Naive thymus-derived CD4-positive, alpha-beta T cell (primary cell): ENCODE measurements at regions of chr13 and their contacts with region 1.

Region 1: GRCh38 chr13:40963919-40964318 is 55.2 kb downstream of the ELF1 start:
- DNase-seq: no peak
- ATAC-seq: peak; percentile 38
- H3K4me3 ChIP-seq: no peak overlapping the region
- H3K4me3 Mint-ChIP-seq: peak overlapping the region in 9 of 10 donors; percentile 4 to 88 (median 35)
- H3K27ac ChIP-seq: no peak overlapping the region
- H3K27ac Mint-ChIP-seq: peak overlapping the region in 4 of 9 donors; percentile 44 to 83 (median 76)
- H3K4me1 ChIP-seq: peaks cover 40 to 62% of the 10 kb centered on the region in 2 donors
- H3K4me1 Mint-ChIP-seq: peaks cover 65 to 95% (median 89%) of the 10 kb centered on the region in 7 donors
- H3K27me3 ChIP-seq: no peaks in the 10 kb centered on the region
- H3K27me3 Mint-ChIP-seq: no peaks in the 10 kb centered on the region

Region 2: DNA sequence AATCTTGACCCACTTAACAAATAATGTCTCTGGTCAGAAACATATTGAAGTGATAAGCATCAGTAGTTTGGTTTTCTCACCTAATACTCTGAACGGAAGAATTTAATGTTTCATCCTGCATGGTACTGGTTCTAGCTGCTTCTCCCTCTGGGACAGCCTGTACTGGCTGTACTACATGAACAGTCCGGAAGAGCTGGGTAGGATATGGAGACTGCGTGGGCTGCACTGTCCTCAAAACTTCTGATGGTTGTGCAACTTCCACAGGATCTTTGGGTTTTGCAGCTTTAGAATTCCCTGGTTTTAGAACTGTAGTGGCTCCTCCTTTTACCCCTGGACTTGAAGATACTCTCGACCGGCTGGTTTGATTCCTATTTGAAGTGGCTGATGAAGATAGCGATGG is 23.1 kb before region 1 on chr13:
- CTCF ChIA-PET with region 1: interaction called, 3 read pairs
- POLR2A ChIA-PET with region 1: interaction called, 10 read pairs
- intact Hi-C with region 1: loop called in 1 of 2 experiments (anchors 2 kb)
- DNase-seq: no peak
- ATAC-seq: no peak
- H3K4me3 ChIP-seq: no peak overlapping the region
- H3K4me3 Mint-ChIP-seq: peak overlapping the region in 1 of 10 donors; percentile 28
- H3K27ac ChIP-seq: no peak overlapping the region
- H3K27ac Mint-ChIP-seq: peak overlapping the region in 8 of 9 donors; percentile 11 to 83 (median 62)
- H3K4me1 ChIP-seq: peaks cover 0 to 3% of the 10 kb centered on the region in 2 donors
- H3K4me1 Mint-ChIP-seq: peaks cover 18 to 69% (median 48%) of the 10 kb centered on the region in 7 donors
- H3K27me3 ChIP-seq: no peaks in the 10 kb centered on the region
- H3K27me3 Mint-ChIP-seq: no peaks in the 10 kb centered on the region

Region 3: DNA sequence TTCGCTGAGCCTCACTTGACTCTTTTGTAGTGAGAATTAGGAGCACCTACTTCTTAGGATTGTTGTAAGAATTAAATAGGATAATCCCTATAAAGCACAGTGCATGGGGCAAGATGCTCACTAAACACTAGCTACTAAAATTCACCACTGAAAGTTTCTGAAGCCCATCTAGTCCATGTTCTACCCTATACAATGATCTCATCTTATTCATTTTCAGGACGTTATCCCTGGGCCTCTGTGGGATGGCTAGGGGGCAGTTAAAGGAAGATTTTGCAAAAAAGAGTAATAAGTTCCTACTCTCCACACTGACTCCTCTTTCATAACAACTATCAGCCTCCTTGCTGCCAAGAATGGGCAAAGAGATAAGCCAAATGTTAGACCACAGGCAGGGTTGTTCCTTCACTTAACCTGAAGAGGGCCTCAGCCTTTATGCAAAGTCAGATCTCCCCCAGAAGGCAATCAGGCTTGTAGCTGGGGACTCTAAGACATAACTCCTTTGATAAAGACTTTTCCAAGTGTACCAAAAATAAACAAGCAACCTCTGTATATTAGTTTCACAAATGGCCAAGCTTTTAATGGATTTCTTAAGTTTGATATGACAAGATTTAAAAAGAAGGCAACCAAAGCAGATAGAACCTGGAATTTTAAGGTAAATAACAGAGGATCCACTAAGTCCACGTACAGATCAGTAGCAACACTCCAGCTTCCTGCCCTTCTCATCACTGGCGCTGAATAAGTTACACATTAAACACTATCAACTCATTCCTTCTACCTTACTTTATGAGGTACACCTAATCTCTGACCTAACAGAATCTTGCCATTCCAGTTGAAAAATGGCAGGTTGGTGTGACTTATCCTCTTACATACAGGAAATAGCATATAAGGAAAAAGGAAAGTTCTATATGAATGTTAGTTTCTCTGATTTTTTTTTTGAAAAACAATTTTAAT is 10.8 kb after region 1 on chr13:
- CTCF ChIA-PET with region 1: interaction called, 7 read pairs
- POLR2A ChIA-PET with region 1: interaction called, 6 read pairs
- intact Hi-C with region 1: loop called in 1 of 2 experiments (anchors 1 kb)
- DNase-seq: peak in 7 of 9 donors; percentile 43 to 66 (median 52)
- ATAC-seq: peak; percentile 88
- H3K4me3 ChIP-seq: no peak overlapping the region
- H3K4me3 Mint-ChIP-seq: peak overlapping the region; percentile 68 to 94 (median 82)
- H3K27ac ChIP-seq: peak overlapping the region; percentile 86
- H3K27ac Mint-ChIP-seq: peak overlapping the region; percentile 64 to 97 (median 82)
- H3K4me1 ChIP-seq: peaks cover 75 to 80% of the 10 kb centered on the region in 2 donors
- H3K4me1 Mint-ChIP-seq: peaks cover 75 to 99% (median 95%) of the 10 kb centered on the region in 7 donors
- H3K27me3 ChIP-seq: no peaks in the 10 kb centered on the region
- H3K27me3 Mint-ChIP-seq: no peaks in the 10 kb centered on the region

Region 4: GRCh38 chr13:41546372-41547190 is 582.7 kb after region 1 on chr13:
- CTCF ChIA-PET with region 1: no interaction called
- POLR2A ChIA-PET with region 1: no interaction called
- intact Hi-C with region 1: no loop called
- DNase-seq: peak in 1 of 9 donors; percentile 45
- ATAC-seq: no peak
- H3K4me3 ChIP-seq: no peak overlapping the region
- H3K4me3 Mint-ChIP-seq: no peak overlapping the region
- H3K27ac ChIP-seq: no peak overlapping the region
- H3K27ac Mint-ChIP-seq: peak overlapping the region in 1 of 9 donors; percentile 53
- H3K4me1 ChIP-seq: no peaks in the 10 kb centered on the region
- H3K4me1 Mint-ChIP-seq: peaks cover 0 to 12% (median under 1%) of the 10 kb centered on the region in 7 donors
- H3K27me3 ChIP-seq: no peaks in the 10 kb centered on the region
- H3K27me3 Mint-ChIP-seq: no peaks in the 10 kb centered on the region